ENCODE measurements at regions of chr10 and their contacts with region 1.

Region 1: DNA sequence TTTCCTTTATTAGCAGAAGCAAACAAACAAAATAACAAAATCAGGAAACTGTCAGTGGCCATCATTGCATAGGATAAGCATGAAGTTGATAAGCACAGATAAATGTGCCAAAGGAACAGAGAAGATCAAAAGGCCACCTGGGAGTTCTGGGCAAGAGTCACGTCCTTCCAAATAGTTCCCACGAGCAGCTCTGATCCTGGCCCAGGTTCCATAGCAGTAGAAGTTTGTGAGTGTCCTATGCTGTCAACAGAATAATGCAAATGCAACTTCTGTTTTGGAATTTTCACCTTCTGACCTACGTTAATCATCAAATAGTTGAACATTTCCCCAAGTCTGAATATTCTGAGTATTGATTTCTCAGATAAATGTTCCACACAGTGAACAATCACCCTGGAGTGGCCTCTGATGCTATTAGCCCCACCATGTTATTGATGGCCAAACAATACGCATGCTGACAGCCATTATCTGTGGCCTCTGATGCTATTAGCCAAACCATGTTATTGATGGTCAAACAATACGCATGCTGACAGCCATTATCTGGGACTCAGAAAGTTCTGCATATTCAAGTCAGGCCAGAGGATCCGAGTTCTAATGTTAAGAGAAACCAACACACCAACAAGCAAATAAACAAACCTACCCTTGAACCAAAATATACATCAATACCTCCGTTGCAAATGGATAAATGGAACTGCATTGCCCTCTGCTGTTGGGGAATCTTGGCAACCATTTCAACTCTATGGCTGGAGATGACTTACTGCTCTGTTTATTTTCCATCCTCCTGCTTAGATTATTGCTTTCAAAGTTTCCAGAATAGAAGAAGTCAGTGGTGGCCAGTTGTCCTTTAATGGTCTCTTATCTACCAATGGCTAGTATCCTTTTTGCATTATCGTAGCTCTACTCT is 63.3 kb downstream of the MRC1 start:
- DNase-seq: peak; percentile 22
- H3K4me3 ChIP-seq: no peak overlapping the region
- H3K27ac ChIP-seq: no peak overlapping the region
- H3K4me1 ChIP-seq: no peaks in the 10 kb centered on the region
- H3K27me3 ChIP-seq: no peaks in the 10 kb centered on the region
- CTCF ChIP-seq: peak; percentile 26

Region 2: GRCh38 chr10:17737027-17737965 is 135.1 kb before region 1 on chr10:
- intact Hi-C with region 1: loop called (anchors 5 kb)
- DNase-seq: no peak
- H3K4me3 ChIP-seq: no peak overlapping the region
- H3K27ac ChIP-seq: no peak overlapping the region
- H3K4me1 ChIP-seq: no peaks in the 10 kb centered on the region
- H3K27me3 ChIP-seq: no peaks in the 10 kb centered on the region
- CTCF ChIP-seq: peak; percentile 76

Region 3: DNA sequence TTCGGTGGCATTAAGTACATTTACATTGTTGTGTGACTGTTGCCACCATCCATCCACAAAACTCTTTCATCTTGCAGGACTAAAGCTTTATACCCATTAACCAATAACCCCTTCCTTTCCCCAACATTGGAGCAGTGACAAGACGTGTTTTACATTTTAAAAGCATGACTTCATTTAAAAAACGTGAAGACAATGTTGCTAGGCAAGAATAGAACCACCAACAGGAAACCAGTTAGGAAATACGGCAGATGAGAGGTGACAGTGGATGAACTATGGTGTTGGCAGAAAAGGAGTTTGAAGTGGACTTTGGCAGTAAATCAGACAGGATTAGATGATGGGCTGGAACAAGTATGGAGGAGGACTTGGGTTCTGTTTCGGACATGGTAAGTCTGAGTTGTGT is 103.5 kb before region 1 on chr10:
- intact Hi-C with region 1: no loop called
- DNase-seq: no peak
- H3K4me3 ChIP-seq: no peak overlapping the region
- H3K27ac ChIP-seq: no peak overlapping the region
- H3K4me1 ChIP-seq: no peaks in the 10 kb centered on the region
- H3K27me3 ChIP-seq: no peaks in the 10 kb centered on the region
- CTCF ChIP-seq: no peak

Region 4: DNA sequence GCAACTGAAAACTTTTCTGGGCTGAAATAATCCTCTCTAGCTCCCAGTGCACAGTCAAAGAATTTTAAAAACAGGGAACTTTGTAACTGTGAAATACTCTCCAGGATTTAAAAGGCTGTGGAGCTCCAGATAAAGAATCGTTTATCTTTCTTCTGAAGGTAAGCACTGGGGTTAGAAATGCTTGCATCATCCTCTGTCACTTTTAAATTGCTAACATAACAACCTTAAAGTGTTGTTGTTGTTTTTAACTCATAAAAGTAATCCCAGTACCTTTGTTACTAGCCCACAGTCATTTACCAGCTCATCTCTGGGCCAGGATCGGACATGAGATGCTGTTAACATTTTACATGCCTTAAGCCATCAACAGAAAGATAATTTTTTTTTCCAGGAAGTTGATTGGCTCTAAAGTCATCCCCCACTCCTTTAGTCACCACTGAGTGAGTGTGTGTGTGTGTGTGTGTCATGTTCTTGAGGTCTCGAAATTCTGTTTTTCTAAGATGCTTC is 79.5 kb after region 1 on chr10 and contains the start of gene SLC39A12:
- intact Hi-C with region 1: no loop called
- DNase-seq: no peak
- H3K4me3 ChIP-seq: no peak within 1 kb of the TSS
- H3K27ac ChIP-seq: no peak within 1 kb of the TSS
- H3K4me1 ChIP-seq: no peaks in the 10 kb centered on the region
- H3K27me3 ChIP-seq: no peaks in the 10 kb centered on the region
- CTCF ChIP-seq: no peak
- total RNA-seq, gene SLC39A12: 0.13 to 0.15 TPM

Region 5: DNA sequence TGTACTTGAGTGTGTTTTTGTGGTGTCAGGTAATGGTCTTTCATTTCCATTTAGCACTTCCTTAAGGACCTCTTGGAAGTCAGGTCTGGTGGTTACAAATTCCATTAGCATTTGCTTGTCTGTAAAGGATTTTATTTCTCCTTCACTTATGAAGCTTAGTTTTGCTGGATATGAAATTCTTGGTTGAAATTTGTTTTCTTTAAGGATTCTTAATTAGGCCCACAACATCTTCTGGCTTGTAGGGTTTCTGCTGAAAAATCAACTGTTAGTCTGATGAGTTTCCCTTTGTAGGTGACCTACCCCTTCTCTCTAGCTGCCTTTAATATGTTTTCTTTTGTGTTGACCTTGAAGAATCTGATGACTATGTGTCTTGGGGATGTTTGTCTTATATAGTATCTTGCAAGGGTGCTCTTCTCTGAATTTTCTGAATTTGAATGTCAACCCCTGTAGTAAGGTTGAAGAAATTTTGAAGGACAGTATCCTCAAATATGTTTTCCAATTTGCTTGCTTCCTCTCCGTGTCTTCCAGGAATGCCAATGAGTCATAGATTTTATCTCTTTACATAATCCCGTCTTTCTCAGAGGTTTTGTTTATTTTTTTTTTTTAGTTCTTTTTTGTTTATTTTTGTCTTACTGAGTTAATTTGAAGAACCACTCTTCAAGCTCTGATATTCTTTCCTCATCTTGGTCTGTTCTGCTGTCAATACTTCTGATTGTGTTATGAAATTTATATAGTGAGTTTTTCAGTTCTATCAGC is 149.5 kb after region 1 on chr10:
- intact Hi-C with region 1: no loop called
- DNase-seq: no peak
- H3K4me3 ChIP-seq: no peak overlapping the region
- H3K27ac ChIP-seq: no peak overlapping the region
- H3K4me1 ChIP-seq: no peaks in the 10 kb centered on the region
- H3K27me3 ChIP-seq: no peaks in the 10 kb centered on the region
- CTCF ChIP-seq: no peak